Lower lobe of right lung (tissue), 2 donors: ENCODE measurements at regions of chrX and their contacts with region 1.

Region 1: GRCh38 chrX:100685284-100685996 is 41.4 kb downstream of the SRPX2 start:
- DNase-seq: no peak
- ATAC-seq: peak; percentile 74 to 89
- H3K4me3 ChIP-seq: no peak overlapping the region
- H3K27ac ChIP-seq: no peak overlapping the region
- H3K4me1 ChIP-seq: no peaks in the 10 kb centered on the region
- H3K27me3 ChIP-seq: no peaks in the 10 kb centered on the region
- CTCF ChIP-seq: peak; percentile 75

Region 2: GRCh38 chrX:100636321-100636991 is 49.0 kb before region 1 on chrX and contains the start of gene TSPAN6:
- intact Hi-C with region 1: no loop called
- DNase-seq: peak; percentile 76
- ATAC-seq: peak; percentile 96 to 98
- H3K4me3 ChIP-seq: peak within 1 kb of the TSS; percentile 62
- H3K27ac ChIP-seq: peak within 1 kb of the TSS; percentile 18
- H3K4me1 ChIP-seq: no peaks in the 10 kb centered on the region
- H3K27me3 ChIP-seq: no peaks in the 10 kb centered on the region
- CTCF ChIP-seq: peak; percentile 39
- total RNA-seq, gene TSPAN6: 12.6 TPM

Region 3: GRCh38 chrX:100768679-100769338 is 83.4 kb after region 1 on chrX:
- intact Hi-C with region 1: loop called (anchors 5 kb)
- DNase-seq: peak; percentile 80
- ATAC-seq: peak; percentile 83 to 96
- H3K4me3 ChIP-seq: no peak overlapping the region
- H3K27ac ChIP-seq: no peak overlapping the region
- H3K4me1 ChIP-seq: no peaks in the 10 kb centered on the region
- H3K27me3 ChIP-seq: no peaks in the 10 kb centered on the region
- CTCF ChIP-seq: peak; percentile 93

Region 4: DNA sequence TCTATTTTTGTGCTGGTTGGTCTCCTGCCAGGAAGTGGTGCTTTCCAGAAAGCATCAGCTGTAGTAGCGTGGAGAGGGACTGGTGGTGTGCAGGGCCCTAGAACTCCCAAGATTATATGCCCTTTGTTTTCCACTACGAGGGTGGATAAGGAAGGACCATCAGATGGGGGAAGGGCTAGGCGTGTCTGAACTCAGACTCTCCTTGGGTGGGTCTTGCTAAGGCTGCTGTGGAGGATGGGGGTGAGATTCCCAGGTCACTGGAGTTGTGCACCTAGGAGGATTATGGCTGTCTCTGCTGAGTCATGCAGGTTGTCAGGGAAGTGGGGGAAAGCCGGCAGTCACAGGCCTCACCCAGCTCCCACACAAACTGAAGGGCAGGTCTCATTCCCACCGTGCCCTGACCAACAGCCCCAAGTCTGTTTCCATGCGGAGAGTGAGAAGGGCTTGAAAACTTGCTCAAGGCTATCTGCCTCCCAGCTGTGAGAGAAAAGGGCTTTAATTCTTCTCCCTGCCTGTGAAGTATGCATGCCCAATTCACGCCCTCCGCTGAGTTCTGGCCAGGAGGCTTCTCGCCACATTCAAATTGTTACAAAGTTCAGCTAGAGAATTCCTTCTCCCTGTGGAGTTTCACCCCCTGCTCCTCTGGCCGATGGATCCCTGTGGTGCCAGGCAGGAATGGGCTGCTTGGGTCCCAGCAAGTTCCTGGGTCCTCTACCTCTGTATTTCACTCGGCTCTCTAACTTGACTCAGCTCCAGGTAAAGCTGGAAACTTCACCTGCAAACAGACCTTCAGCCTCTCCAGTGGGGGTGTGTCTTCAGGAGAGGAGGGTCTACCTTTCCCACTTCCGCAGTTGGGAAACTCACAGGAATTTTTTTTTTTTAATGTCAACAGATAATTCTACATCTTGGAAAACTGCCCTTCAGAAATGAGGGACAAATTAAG is 127.0 kb after region 1 on chrX:
- intact Hi-C with region 1: no loop called
- DNase-seq: no peak
- ATAC-seq: no peak
- H3K4me3 ChIP-seq: no peak overlapping the region
- H3K27ac ChIP-seq: no peak overlapping the region
- H3K4me1 ChIP-seq: no peaks in the 10 kb centered on the region
- H3K27me3 ChIP-seq: no peaks in the 10 kb centered on the region
- CTCF ChIP-seq: no peak